HAP-1 (cell line): ENCODE measurements at regions of chr19 and their contacts with region 1.

Region 1: DNA sequence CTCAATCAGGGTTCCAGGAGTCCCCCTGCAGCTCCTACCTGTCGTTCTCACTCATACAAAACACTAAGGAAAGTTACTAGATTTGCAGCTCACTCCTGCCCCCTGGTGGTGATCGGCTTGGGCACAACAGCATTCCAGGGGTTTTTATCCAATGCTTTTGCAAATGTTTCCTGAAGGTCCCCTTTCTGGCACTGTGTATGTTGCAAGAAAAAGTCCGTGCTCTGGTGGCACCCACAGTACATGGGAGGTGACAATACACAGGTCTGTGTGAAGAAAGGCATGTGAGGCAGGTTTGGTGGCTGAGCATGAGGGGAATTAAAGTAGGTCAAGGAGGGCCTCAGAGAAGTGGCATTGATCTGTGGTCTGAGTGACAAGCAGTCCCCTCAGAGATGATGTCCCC is 8.6 kb upstream of the TYK2 start:
- DNase-seq: peak; percentile 71 to 94
- H3K4me3 ChIP-seq: no peak overlapping the region
- H3K4me1 ChIP-seq: no peaks in the 10 kb centered on the region
- H3K27me3 ChIP-seq: no peaks in the 10 kb centered on the region

Region 2: DNA sequence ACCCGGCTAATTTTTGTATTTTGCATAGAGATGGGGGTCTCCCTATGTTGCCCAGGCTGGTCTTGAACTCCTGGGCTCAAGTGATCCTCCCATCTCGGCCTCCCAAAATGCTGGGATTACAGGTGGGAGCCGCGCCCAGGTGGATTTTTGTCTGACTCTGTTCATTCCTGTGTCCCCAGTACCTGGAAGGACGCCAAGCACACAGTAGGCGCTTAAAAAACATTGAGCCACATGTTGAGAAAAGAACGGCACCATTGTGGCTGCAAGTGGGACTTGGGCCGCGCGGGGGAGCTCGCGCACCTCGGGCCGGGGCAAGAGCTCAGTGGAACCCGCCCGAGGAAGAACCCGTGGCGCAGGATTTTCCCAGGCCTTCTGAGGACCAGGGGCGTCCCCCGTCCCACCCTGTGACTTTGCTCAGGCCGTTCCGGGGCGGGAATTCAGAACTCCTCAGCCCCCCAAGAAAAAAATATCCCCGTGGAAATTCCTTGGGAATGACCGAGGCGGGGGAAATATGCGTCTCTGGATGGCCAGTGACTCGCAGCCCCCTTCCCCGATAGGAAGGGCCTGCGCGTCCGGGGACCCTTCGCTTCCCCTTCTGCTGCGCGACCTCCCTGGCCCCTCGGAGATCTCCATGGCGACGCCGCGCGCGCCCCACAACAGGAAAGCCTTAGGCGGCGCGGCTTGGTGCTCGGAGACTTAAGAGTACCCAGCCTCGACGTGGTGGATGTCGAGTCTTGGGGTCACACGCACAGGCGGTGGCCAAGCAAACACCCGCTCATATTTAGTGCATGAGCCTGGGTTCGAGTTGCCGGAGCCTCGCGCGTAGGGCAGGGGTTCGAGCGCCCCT is 119.4 kb before region 1 on chr19:
- in situ Hi-C with region 1: loop called (anchors 5 kb)
- DNase-seq: peak; percentile 41 to 91
- H3K4me3 ChIP-seq: peak overlapping the region; percentile 9
- H3K4me1 ChIP-seq: peaks cover 9% of the 10 kb centered on the region
- H3K27me3 ChIP-seq: peaks cover 4% of the 10 kb centered on the region; the same call in 1 of the 2 replicates